Gastrocnemius medialis (tissue), 4 donors: ENCODE measurements at regions of chr1 and their contacts with region 1.

Region 1: DNA sequence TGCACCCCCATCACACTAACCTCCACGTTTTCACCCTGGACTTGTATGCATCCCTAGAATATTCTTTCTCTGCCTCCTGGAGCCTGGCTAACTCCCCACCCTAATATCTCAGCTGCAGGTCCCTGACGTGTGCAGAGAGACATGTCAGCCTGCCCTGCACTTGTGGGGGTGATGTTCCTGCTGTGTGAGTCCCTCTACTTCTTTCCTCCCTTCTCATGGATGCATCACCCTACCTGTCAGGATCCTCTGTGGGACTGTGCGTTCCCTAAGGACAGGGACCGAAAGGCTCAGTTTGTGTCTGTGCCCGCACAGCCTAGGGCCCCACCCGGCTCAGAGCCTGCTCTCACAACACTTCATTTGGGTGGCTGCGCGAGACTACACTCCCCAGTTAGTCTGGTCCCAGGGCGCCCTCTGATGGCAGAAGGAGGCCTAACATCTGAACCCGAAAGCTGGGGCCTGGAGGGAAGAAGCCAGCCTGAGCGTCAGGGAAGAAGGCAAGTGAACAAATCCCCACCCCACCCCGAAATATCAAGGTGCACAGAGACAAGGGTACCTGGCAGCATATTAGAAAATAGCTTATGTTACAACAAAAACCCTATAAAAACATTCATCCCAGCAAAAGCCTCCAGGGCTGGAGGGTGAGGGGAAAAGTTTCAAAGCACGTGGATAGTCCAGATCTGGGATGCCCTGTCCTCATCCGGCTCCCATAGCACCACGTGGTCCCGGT is 3.7 kb downstream of the CD52 start:
- DNase-seq: peak; percentile 83 to 86
- ATAC-seq: peak; percentile 85 to 92
- H3K4me3 ChIP-seq: no peak overlapping the region
- H3K27ac ChIP-seq: no peak overlapping the region
- H3K4me1 ChIP-seq: peaks cover 4 to 5% of the 10 kb centered on the region in 2 donors
- H3K27me3 ChIP-seq: no peaks in the 10 kb centered on the region
- CTCF ChIP-seq: peak; percentile 88 to 95 (median 91)
- POLR2A ChIP-seq: no peak

Region 2: DNA sequence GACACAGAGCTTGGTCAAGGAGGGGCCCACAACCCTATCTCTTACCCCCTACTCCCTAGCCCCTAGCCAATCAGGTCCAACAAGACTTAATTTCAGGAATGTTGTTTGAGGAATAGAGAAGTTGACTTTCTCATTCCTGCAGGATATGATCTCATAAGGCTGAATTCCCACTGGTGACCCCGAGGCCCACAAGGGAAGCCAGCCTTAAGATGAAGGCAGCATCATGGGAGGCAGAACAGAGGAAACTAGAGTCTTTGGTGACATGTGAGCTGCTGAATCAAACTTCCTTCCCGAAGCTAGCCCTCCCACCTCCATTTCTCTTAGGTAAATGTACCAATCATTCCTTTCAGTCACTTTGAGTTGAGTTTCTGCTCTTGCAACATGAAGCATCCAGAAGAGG is 219.0 kb before region 1 on chr1:
- in situ Hi-C with region 1: no loop called
- intact Hi-C with region 1: loop called (anchors 1 kb)
- DNase-seq: no peak
- ATAC-seq: no peak
- H3K4me3 ChIP-seq: no peak overlapping the region
- H3K27ac ChIP-seq: no peak overlapping the region
- H3K4me1 ChIP-seq: peaks cover 3 to 12% of the 10 kb centered on the region in 2 donors
- H3K27me3 ChIP-seq: no peaks in the 10 kb centered on the region
- CTCF ChIP-seq: no peak
- POLR2A ChIP-seq: no peak

Region 3: DNA sequence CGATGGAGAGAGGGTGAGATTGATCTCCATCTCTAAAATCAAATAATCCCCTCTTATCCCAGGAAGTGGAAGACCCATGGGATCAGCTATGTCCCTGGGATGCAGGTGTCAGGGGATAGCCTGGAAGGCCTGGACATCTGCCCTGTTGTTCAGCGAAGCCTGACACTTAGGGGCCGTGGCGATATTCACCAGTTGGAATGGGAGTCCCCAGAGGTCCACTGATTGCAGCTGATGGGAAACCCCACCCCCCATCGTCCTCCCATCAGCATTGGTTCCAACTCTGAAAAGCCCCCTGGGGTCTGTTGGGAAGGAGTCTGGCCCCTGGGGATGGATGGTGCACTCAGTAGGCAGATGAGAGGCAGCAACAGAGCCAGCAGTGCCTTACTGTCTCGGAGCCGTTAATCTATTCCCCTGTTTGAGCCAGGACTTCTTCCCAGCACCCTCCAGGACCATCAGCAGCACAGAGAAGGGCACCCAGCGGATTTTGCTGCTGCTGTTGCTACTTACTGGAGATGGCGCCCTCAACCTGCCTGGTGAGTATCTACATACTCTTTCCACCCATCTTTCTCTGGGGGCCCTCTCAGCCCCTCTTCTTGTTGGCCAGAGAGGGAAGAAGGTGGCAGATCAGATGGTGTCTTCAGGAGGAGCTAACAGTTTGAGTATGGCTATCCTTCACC is 117.7 kb before region 1 on chr1:
- in situ Hi-C with region 1: no loop called
- intact Hi-C with region 1: loop called (anchors 10 kb)
- DNase-seq: no peak
- ATAC-seq: no peak
- H3K4me3 ChIP-seq: no peak overlapping the region
- H3K27ac ChIP-seq: no peak overlapping the region
- H3K4me1 ChIP-seq: no peaks in the 10 kb centered on the region
- H3K27me3 ChIP-seq: no peaks in the 10 kb centered on the region
- CTCF ChIP-seq: no peak
- POLR2A ChIP-seq: no peak

Region 4: GRCh38 chr1:26279456-26280332 is 41.8 kb before region 1 on chr1 and contains the start of gene SH3BGRL3:
- in situ Hi-C with region 1: loop called in 2 of 4 experiments (anchors 5 kb)
- intact Hi-C with region 1: loop called (anchors 1 kb)
- DNase-seq: peak; percentile 78 to 82
- ATAC-seq: peak; percentile 27 to 40
- H3K4me3 ChIP-seq: peak within 1 kb of the TSS; percentile 75 to 84 (median 78)
- H3K27ac ChIP-seq: peak within 1 kb of the TSS; percentile 89 to 98 (median 93)
- H3K4me1 ChIP-seq: peaks cover 54 to 67% of the 10 kb centered on the region in 2 donors
- H3K27me3 ChIP-seq: no peaks in the 10 kb centered on the region
- CTCF ChIP-seq: peak in 3 of 5 experiments; percentile 8 to 27 (median 20)
- POLR2A ChIP-seq: peak; percentile 84 to 90
- total RNA-seq, gene SH3BGRL3: 10.3 to 16.9 (median 13.1) TPM

Region 5: DNA sequence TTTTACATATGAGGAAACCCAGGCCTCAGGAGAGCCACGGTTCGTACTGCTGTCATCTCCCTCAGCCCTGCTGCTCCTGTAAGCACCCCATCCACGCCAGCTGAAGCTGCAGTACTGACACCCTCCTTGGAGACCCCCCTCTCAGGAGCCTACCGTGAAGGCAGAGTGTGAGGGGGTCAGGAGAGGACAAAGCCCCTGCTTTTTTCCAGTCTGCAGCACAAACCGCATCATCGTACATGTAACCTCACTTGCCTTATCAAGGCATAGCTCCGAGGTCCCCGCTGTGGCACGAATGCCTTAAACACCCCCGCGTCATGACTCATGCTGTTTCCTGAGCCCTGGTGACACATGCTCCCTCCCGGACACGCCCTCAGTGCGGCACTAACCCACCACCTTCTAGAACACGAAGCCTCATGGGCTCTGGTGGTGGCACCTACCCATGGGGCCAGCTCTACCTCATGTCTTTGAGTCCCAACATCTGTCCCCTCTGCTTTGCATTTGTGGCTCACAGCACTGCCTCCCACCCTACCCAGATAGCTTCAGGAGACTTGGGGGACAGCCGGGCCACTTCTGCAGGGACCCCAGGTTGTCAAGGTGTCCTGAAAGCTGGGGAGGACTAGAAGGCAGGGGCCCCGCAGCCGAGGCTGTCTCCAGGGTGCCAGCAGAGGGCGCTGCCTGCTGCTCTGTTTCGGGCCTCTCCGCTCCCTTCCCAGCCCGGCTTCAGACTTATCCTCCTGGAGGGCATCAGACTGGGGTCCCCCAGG is 36.7 kb before region 1 on chr1:
- in situ Hi-C with region 1: loop called in 3 of 4 experiments (anchors 5 kb)
- intact Hi-C with region 1: loop called (anchors 1 kb)
- DNase-seq: peak; percentile 85 to 91
- ATAC-seq: peak; percentile 57 to 63
- H3K4me3 ChIP-seq: no peak overlapping the region
- H3K27ac ChIP-seq: peak overlapping the region; percentile 89 to 98 (median 93)
- H3K4me1 ChIP-seq: peaks cover 40 to 56% of the 10 kb centered on the region in 2 donors
- H3K27me3 ChIP-seq: no peaks in the 10 kb centered on the region
- CTCF ChIP-seq: peak; percentile 53 to 82 (median 72)
- POLR2A ChIP-seq: peak in 1 of 2 donors; percentile 17